WTC11 (cell line): ENCODE measurements at regions of chr10 and their contacts with region 1.

Region 1: GRCh38 chr10:43380610-43381222 is 9.3 kb downstream of the FXYD4 start:
- DNase-seq: no peak
- ATAC-seq: no peak
- H3K4me3 Mint-ChIP-seq: no peak overlapping the region
- H3K27ac Mint-ChIP-seq: no peak overlapping the region
- H3K4me1 Mint-ChIP-seq: peaks cover 21% of the 10 kb centered on the region
- H3K27me3 Mint-ChIP-seq: no peaks in the 10 kb centered on the region; the same call in 1 of the 2 replicates
- CTCF ChIP-seq: no peak

Region 2: GRCh38 chr10:43420369-43421200 is 39.9 kb after region 1 on chr10:
- CTCF ChIA-PET with region 1: no interaction called
- POLR2A ChIA-PET with region 1: no interaction called
- DNase-seq: peak; percentile 65
- ATAC-seq: peak; percentile 87
- H3K4me3 Mint-ChIP-seq: peak overlapping the region; percentile 74
- H3K27ac Mint-ChIP-seq: peak overlapping the region; percentile 78
- H3K4me1 Mint-ChIP-seq: peaks cover 6% of the 10 kb centered on the region
- H3K27me3 Mint-ChIP-seq: peaks cover 20% of the 10 kb centered on the region
- CTCF ChIP-seq: no peak

Region 3: DNA sequence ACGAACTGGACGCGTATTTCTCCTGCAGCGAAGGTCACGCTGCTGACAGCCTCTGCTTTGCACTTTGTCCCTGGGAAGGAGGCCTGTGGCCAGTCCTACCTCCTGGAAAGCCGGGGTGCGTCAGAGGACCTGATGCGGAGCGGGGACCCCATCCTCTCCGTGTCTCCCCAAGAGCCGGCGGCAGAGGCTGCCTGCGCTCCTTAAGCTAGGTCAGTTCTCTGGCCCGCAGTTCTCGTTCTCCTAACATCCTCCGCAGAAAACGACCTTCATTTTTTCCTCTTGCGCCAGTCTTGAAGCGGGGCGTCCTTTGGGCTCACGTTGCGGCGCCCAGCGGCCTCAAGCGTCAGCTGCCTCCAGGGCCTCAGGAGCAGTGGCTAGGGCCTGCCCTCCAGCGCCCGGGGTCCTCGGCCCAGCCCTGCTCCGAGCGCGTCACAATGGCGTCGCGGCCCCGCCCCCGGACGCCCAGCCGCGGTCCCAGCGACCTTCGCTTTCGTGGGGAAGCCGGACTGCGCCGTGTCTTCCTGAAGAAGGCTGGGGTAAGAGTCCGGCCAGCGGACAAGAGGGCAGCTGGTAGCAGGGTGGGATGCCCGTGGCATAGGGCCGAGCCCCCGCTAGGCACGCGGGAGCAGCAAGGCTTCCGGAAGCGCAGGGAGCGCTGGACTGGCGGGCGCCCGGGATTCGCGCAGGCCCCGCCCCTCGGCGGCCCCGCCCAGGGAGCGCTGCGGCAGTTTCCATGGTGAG is 55.9 kb after region 1 on chr10 and contains the start of gene ZNF487:
- CTCF ChIA-PET with region 1: no interaction called
- POLR2A ChIA-PET with region 1: interaction called, 11 read pairs
- DNase-seq: peak; percentile 91
- ATAC-seq: peak; percentile 95
- H3K4me3 Mint-ChIP-seq: peak within 1 kb of the TSS; percentile 92
- H3K27ac Mint-ChIP-seq: peak within 1 kb of the TSS; percentile 97
- H3K4me1 Mint-ChIP-seq: peaks cover 7% of the 10 kb centered on the region
- H3K27me3 Mint-ChIP-seq: no peaks in the 10 kb centered on the region
- CTCF ChIP-seq: no peak
- total RNA-seq, gene ZNF487: 1.2 to 2.3 TPM (median 1.4 TPM) in 3 replicates